ENCODE measurements at regions of chr15 and their contacts with region 1.

Region 1: DNA sequence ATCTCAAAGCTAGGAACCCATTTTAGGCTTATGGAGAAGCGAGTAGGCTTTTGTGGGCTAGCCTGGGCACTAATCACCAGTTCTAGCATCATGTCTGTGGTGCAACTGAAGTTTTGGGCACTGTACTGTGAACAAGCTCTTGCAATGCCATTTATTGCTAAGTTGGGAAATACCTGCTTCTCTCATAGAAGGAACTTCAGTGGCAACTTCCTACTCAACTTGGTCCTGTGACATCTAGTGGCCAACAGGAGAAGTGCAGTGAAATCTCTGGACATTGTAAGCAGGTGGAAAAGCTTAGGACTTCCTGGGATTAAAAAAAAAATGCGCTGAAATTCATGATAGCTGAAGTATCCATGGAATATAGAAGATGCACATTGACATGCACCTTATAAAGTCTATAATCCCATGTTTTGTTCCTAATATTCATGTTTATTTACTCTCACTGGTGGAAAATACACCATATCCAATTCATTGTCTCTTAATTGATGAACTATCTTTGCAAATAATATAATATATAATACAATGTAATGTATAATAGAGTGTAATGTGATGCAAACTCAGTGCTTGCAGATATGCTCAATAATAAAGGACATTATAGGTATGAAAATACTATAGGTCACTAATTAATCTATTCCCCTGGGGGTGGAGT is 6.5 kb upstream of the ALDH1A3 start:
- DNase-seq: peak; percentile 82
- H3K4me3 ChIP-seq: no peak overlapping the region
- H3K27ac ChIP-seq: no peak overlapping the region
- H3K4me1 ChIP-seq: no peaks in the 10 kb centered on the region
- H3K27me3 ChIP-seq: peaks cover 5 to 6% of the 10 kb centered on the region in 2 experiments
- CTCF ChIP-seq: peak; percentile 73 to 74
- POLR2A ChIP-seq: no peak

Region 2: DNA sequence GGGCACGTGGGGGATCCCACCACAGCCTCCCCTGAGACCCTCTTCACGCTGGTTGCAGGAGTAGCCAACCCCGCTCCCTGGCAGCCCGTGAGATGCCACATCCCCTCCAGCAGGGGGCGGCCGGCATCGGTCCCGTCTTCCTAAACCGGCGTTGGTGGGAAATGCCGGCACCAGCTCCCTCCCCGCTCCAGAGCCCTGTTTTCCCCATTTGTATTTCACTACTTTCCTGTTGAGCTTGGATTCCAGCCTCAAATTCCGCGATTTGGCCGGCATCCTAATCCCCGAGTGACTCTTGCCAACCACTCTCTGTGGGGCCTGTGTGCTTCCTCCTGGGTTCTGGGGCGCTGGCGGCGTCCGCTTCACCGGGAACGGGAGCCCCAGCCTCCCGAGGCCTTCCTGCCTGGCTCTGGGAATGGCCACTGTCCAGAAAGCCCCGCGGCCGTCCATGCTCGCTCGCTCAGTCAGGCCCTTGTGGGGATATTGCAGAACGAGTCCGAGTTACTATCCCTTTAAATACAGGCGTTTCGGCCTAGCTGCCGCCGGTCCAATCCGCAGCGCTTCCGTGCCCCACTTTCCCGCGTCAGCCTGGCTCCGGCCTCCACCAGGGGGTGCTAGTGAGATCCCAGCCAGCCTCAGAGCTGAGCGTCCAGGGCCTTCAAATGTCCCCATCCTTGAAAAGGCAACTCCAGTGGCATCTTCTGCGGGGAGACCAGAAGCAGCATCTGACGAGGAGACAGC is 523.3 kb before region 1 on chr15:
- CTCF ChIA-PET with region 1: interaction called, 4 read pairs
- POLR2A ChIA-PET with region 1: interaction called, 3 read pairs
- dilution Hi-C with region 1: no loop called
- intact Hi-C with region 1: loop called (anchors 10 kb)
- DNase-seq: peak; percentile 81
- H3K4me3 ChIP-seq: peak overlapping the region; percentile 18 to 59 (median 55)
- H3K27ac ChIP-seq: no peak overlapping the region
- H3K4me1 ChIP-seq: no peaks in the 10 kb centered on the region
- H3K27me3 ChIP-seq: no peaks in the 10 kb centered on the region
- CTCF ChIP-seq: peak; percentile 89 to 98
- POLR2A ChIP-seq: no peak

Region 3: GRCh38 chr15:100663086-100663914 is 209.9 kb before region 1 on chr15:
- CTCF ChIA-PET with region 1: interaction called, 13 read pairs
- POLR2A ChIA-PET with region 1: no interaction called
- dilution Hi-C with region 1: no loop called
- intact Hi-C with region 1: no loop called
- DNase-seq: no peak
- H3K4me3 ChIP-seq: no peak overlapping the region
- H3K27ac ChIP-seq: no peak overlapping the region
- H3K4me1 ChIP-seq: no peaks in the 10 kb centered on the region
- H3K27me3 ChIP-seq: peaks cover 0 to 7% of the 10 kb centered on the region in 2 experiments
- CTCF ChIP-seq: peak in 1 of 2 donors; percentile 24
- POLR2A ChIP-seq: no peak

Region 4: DNA sequence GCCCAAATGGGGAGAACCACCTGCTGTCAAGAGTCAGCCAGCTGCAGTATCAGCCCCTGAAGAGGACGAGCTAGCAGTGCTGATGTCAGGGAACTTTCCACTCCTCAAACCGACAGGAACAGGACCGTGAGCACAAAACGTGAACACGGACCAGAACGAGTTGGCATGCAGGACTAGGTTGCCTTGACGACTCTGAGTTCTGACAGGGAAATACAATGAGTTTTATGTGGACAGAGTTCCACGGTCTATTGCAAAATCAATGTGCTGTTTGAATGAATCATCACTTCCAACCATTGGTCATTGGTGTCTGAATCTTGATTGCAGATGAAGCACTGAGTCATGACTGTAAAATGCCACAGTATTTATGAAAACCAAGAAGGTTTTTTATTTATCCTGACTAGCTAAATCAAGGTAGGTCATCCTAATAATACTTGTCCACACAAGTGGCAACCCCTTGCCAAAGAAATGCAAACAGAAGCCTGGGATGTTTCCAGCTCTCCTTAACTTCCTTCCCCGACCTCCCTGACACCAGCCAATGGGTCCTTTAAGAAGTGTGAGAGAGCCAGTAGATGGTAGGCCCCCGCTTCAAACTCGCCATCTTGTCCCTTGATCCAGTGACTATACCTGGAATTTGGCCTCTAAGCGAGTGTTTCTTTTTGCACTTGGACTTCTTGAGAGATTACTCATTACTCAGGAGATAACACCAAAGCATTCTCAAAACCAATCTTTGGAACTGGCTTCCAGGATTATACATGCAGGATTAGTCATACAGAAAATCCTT is 151.2 kb before region 1 on chr15:
- CTCF ChIA-PET with region 1: interaction called, 10 read pairs
- POLR2A ChIA-PET with region 1: no interaction called
- dilution Hi-C with region 1: no loop called
- intact Hi-C with region 1: loop called (anchors 5 kb)
- DNase-seq: peak; percentile 96
- H3K4me3 ChIP-seq: no peak overlapping the region
- H3K27ac ChIP-seq: peak overlapping the region; percentile 82
- H3K4me1 ChIP-seq: peaks cover 27% of the 10 kb centered on the region
- H3K27me3 ChIP-seq: no peaks in the 10 kb centered on the region
- CTCF ChIP-seq: no peak
- POLR2A ChIP-seq: no peak

Region 5: GRCh38 chr15:100889385-100890050 is 16.4 kb after region 1 on chr15:
- CTCF ChIA-PET with region 1: interaction called, 17 read pairs
- POLR2A ChIA-PET with region 1: no interaction called
- dilution Hi-C with region 1: no loop called
- intact Hi-C with region 1: no loop called
- DNase-seq: peak; percentile 85
- H3K4me3 ChIP-seq: peak overlapping the region in 1 of 3 experiments; percentile 3
- H3K27ac ChIP-seq: peak overlapping the region; percentile 43
- H3K4me1 ChIP-seq: peaks cover 35% of the 10 kb centered on the region
- H3K27me3 ChIP-seq: no peaks in the 10 kb centered on the region
- CTCF ChIP-seq: no peak
- POLR2A ChIP-seq: peak; percentile 50

Region 6: DNA sequence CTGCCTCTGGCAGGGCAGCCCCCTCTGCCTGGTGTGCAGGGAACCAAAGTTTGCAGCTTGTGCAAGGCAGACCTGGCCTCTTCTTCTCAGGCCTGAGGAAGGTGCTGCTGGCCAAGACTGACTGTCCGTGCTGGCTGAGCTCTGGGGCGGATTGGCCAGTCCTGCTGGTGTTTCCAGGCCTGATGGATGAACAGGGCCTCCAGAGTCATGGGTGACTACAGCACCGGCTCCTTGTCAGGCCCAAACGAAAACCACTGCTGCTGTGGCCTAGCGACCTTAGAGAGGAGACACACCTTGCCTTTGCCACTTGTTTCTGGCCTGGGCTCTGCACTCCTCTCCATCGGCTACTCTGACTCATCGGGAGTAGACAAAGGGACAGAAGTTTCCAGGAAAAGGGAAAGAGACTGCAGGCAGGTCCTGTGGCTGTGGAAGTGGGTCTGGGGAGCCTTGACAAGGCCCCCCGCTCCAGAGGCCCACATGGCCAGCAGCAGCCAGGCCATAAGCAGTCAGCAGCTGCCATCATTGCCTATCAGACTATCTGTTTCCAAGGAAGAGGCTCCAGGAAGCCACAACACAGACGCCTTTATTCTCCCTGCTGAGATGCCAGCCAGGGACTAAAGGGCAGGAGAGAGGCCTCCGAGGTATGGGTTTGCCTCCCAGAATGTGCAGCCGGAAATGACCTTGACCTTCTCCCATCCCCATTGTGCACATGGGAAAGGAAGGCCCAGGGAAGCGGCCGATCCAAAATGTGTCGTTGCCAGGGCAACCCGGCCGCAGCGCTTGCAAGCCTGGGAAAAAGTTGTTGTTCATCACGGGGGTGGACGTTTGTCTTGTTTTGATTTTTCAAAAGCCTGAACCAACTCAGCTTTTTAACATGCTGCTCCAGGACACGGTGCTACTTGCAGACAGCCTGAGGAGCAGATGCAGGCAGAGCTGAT is 218.2 kb after region 1 on chr15:
- CTCF ChIA-PET with region 1: no interaction called
- POLR2A ChIA-PET with region 1: no interaction called
- dilution Hi-C with region 1: no loop called
- intact Hi-C with region 1: no loop called
- DNase-seq: peak; percentile 86
- H3K4me3 ChIP-seq: no peak overlapping the region
- H3K27ac ChIP-seq: peak overlapping the region; percentile 66
- H3K4me1 ChIP-seq: peaks cover 17% of the 10 kb centered on the region
- H3K27me3 ChIP-seq: peaks cover 0 to 5% of the 10 kb centered on the region in 2 experiments
- CTCF ChIP-seq: no peak
- POLR2A ChIP-seq: no peak